Pancreas (tissue), 10 donors: ENCODE measurements at regions of chr6 and their contacts with region 1.

Region 1: DNA sequence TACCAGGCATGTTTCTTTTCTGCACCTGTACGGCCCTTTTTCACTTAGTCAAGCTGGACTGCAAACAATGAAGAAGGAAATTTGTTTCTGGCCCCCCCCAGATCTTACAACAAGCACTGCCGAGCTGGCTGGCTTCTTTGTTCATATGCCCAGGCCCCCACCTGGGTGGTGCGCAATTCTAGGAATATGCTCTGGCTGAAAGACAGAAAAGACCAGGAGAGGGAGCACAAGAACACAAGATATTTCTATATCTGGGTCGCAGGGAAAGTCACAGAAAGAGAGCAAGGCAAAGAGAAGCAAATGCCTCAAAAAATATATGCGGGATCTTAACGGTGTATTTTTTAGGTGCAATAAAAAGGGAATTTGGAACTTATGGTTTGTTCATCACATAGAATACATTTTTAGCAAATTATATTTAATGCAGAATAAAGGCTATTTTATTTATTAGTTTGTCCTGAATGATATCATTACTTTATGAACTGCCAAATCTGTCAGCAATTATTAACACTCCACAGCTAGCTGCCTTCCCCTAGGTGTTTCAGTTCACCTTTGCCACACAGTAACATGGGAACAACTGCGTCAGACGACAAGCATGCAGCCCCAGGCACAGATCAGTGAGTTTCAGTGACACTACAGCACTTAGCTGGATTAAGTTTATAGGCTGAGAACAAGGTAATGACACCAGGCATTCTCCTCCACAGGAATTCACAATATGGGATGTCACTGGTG is 76.5 kb downstream of the GJA10 start:
- DNase-seq: peak in 4 of 6 donors; percentile 20 to 47 (median 24)
- ATAC-seq: peak; percentile 81 to 95 (median 92)
- H3K4me3 ChIP-seq: no peak overlapping the region
- H3K27ac ChIP-seq: peak overlapping the region in 3 of 4 donors; percentile 42 to 62 (median 61)
- H3K4me1 ChIP-seq: peaks cover 0 to 4% (median 0%) of the 10 kb centered on the region in 3 donors
- H3K27me3 ChIP-seq: no peaks in the 10 kb centered on the region
- CTCF ChIP-seq: peak in 3 of 4 donors; percentile 21 to 30 (median 27)

Region 2: GRCh38 chr6:89711801-89712200 is 259.0 kb before region 1 on chr6:
- intact Hi-C with region 1: no loop called
- DNase-seq: no peak
- ATAC-seq: no peak
- H3K4me3 ChIP-seq: no peak overlapping the region
- H3K27ac ChIP-seq: no peak overlapping the region
- H3K4me1 ChIP-seq: no peaks in the 10 kb centered on the region
- H3K27me3 ChIP-seq: no peaks in the 10 kb centered on the region
- CTCF ChIP-seq: no peak

Region 3: GRCh38 chr6:90304308-90304707 is 333.5 kb after region 1 on chr6:
- intact Hi-C with region 1: loop called in 1 of 3 experiments (anchors 10 kb)
- DNase-seq: no peak
- ATAC-seq: no peak
- H3K4me3 ChIP-seq: no peak overlapping the region
- H3K27ac ChIP-seq: no peak overlapping the region
- H3K4me1 ChIP-seq: no peaks in the 10 kb centered on the region
- H3K27me3 ChIP-seq: no peaks in the 10 kb centered on the region
- CTCF ChIP-seq: no peak

Region 4: GRCh38 chr6:90393232-90393884 is 422.6 kb after region 1 on chr6:
- intact Hi-C with region 1: loop called in 2 of 3 experiments (anchors 5 to 10 kb)
- DNase-seq: peak in 2 of 6 donors; percentile 16 to 60
- ATAC-seq: peak in 3 of 4 donors; percentile 81 to 85 (median 84)
- H3K4me3 ChIP-seq: no peak overlapping the region
- H3K27ac ChIP-seq: no peak overlapping the region
- H3K4me1 ChIP-seq: peaks cover 0 to 2% (median 0%) of the 10 kb centered on the region in 3 donors
- H3K27me3 ChIP-seq: no peaks in the 10 kb centered on the region
- CTCF ChIP-seq: peak; percentile 31 to 62 (median 54)